Transverse colon (tissue), 4 donors: ENCODE measurements at regions of chr9 and their contacts with region 1.

Region 1: DNA sequence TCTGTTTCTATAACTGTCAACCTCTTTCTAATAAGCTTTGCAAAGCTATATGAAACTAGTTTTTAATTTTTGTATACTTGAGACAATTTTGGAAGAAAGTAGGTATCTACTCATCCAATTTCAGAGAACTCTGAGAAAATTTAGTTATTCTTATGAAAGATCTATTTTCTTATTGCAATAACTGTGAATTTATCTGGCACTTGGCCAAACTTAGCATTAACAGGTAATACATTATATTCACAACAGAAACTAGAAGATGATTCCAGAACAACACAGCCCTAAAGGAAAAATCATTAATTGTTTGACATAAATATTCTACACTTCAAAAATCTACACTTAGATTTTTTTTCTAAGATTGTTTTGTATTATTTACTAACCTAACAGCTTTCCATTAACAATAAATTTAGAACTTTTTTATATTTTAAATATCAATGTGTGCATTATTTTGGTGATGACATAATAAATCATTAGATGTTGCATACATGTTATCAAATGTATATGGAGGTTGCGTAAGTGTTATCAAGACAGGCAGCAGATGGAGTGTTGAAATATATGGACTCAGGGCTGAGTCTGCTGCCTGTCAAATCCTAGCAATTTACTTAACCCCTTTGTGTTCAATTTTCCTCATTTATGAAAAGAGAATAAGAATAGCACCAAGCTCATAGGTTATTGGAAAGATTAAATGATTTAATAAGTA is 141.8 kb downstream of the MUSK start:
- DNase-seq: no peak
- H3K4me3 ChIP-seq: no peak overlapping the region
- H3K27ac ChIP-seq: no peak overlapping the region
- H3K4me1 ChIP-seq: no peaks in the 10 kb centered on the region
- H3K27me3 ChIP-seq: no peaks in the 10 kb centered on the region
- CTCF ChIP-seq: no peak
- EP300 ChIP-seq: no peak
- POLR2A ChIP-seq: no peak

Region 2: DNA sequence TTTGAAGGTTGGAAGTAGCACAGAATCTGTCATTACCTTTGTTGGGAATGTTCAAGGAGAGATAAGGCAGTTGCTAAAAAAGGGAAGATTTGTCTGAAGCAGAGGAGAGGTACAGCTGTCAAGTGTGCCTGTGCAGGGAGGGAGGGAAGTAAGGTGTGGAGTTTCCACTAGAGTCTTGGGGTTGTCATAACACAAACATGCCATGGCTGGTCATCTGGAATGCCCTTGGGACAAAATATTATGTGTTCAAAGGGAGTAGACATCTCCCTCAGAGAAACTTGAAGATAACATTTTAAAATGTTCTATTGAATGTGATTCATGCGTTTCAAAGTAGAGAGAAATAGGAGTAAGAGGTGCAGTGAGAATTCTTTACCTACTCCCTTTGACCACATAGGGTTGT is 46.8 kb before region 1 on chr9:
- in situ Hi-C with region 1: no loop called
- intact Hi-C with region 1: loop called (anchors 2 kb)
- DNase-seq: no peak
- H3K4me3 ChIP-seq: no peak overlapping the region
- H3K27ac ChIP-seq: no peak overlapping the region
- H3K4me1 ChIP-seq: no peaks in the 10 kb centered on the region
- H3K27me3 ChIP-seq: no peaks in the 10 kb centered on the region
- CTCF ChIP-seq: no peak
- EP300 ChIP-seq: no peak
- POLR2A ChIP-seq: no peak

Region 3: DNA sequence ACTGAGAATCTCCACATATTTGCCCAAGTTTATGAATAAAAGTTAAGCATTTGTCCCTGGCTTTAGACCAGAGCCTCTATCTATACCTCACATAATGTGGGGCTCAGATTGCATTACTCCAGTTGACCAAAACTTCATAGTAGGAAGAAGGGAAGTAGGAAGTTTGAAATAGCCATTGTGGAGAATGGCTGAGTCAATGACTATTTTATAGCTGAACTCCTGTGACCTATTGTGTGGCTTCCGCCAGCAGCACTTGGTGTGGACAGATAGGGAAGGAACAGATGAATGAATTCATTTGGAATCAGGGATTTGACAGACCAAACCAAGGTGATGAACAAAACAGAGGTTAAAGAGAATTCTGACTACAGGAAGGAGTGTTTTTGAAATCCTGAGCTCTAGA is 320.8 kb after region 1 on chr9:
- in situ Hi-C with region 1: no loop called
- intact Hi-C with region 1: no loop called
- DNase-seq: no peak
- H3K4me3 ChIP-seq: no peak overlapping the region
- H3K27ac ChIP-seq: no peak overlapping the region
- H3K4me1 ChIP-seq: no peaks in the 10 kb centered on the region
- H3K27me3 ChIP-seq: no peaks in the 10 kb centered on the region
- CTCF ChIP-seq: no peak
- EP300 ChIP-seq: no peak
- POLR2A ChIP-seq: no peak